ENCODE measurements at regions of chr16 and their contacts with region 1.

Region 1: GRCh38 chr16:23182460-23183309 is at the start of gene SCNN1G:
- DNase-seq: peak; percentile 83 to 87
- H3K4me3 ChIP-seq: peak within 1 kb of the TSS; percentile 25 to 70 (median 66)
- H3K27ac ChIP-seq: peak within 1 kb of the TSS in 1 of 2 donors; percentile 7
- H3K4me1 ChIP-seq: no peaks in the 10 kb centered on the region
- H3K27me3 ChIP-seq: peaks cover 4 to 7% of the 10 kb centered on the region in 2 donors
- CTCF ChIP-seq: peak in 2 of 3 donors; percentile 34 to 93
- POLR2A ChIP-seq: no peak
- total RNA-seq, gene SCNN1G: 2.0 to 8.8 TPM in 2 of 3 donors, not detected in the other

Region 2: GRCh38 chr16:23434380-23434779 is 251.7 kb after region 1 on chr16:
- intact Hi-C with region 1: loop called (anchors 1 kb)
- DNase-seq: no peak
- H3K4me3 ChIP-seq: no peak overlapping the region
- H3K27ac ChIP-seq: no peak overlapping the region
- H3K4me1 ChIP-seq: no peaks in the 10 kb centered on the region
- H3K27me3 ChIP-seq: no peaks in the 10 kb centered on the region
- CTCF ChIP-seq: peak; percentile 86 to 94 (median 92)
- POLR2A ChIP-seq: no peak

Region 3: GRCh38 chr16:23930791-23931190 is 748.1 kb after region 1 on chr16:
- intact Hi-C with region 1: loop called (anchors 10 kb)
- DNase-seq: no peak
- H3K4me3 ChIP-seq: no peak overlapping the region
- H3K27ac ChIP-seq: no peak overlapping the region
- H3K4me1 ChIP-seq: no peaks in the 10 kb centered on the region
- H3K27me3 ChIP-seq: peaks cover 0 to 4% of the 10 kb centered on the region in 2 donors
- CTCF ChIP-seq: no peak
- POLR2A ChIP-seq: no peak

Measured in breast epithelium (tissue), 4 donors.